Calu3 (cell line): ENCODE measurements at regions of chr14 and their contacts with region 1.

Region 1: DNA sequence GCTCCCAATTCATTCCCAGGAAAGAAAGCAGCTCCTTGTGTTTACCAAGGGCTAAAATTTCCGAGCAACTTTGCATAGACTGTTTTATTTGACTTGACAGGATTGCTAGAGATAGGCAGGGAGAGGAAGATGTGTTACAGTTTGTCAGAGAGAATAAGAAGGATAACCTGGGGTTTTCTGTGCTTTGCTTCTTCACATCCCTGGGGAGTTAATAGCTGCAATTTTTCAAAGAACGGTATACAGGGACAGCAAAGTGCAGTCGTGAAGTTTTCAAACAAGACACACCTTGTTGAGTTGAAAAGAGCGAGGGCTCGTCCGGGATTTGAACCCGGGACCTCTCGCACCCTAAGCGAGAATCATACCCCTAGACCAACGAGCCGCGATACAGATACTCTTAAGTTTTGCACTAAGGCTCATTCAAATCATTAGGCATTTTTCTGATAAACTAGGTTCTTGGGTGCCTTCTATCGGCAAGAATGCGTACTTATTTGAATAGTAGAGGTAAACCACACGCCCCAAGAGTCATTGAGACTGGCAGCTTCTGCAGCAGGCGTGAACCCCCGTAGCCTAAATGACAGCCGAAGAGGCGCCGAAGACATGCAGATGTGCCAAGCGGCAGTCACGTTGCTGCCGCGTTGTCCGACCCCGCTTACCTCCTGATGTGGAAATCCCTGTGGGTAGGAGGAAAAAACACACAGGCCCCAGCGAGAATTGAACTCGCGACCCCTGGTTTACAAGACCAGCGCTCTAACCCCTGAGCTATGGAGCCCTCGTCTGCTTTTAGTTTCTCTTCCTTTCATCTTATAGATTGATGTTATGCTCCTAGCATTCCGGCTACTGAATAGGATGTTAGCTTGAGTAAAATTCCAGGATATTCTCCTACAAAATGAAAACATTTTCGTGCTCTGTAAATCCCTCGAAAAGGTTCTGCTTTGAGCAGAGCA is 22.2 kb upstream of the RNASE12 start:
- DNase-seq: peak; percentile 86
- H3K4me3 Mint-ChIP-seq: no peak overlapping the region
- H3K27ac Mint-ChIP-seq: no peak overlapping the region
- H3K4me1 Mint-ChIP-seq: peaks cover 8% of the 10 kb centered on the region
- H3K27me3 Mint-ChIP-seq: no peaks in the 10 kb centered on the region
- CTCF ChIP-seq: peak; percentile 72

Region 2: GRCh38 chr14:20343092-20343861 is 270.1 kb before region 1 on chr14 and contains the start of gene PARP2:
- CTCF ChIA-PET with region 1: interaction called, 11 read pairs
- intact Hi-C with region 1: no loop called
- DNase-seq: peak; percentile 98
- H3K4me3 Mint-ChIP-seq: peak within 1 kb of the TSS; percentile 93
- H3K27ac Mint-ChIP-seq: peak within 1 kb of the TSS; percentile 98
- H3K4me1 Mint-ChIP-seq: peaks cover 7% of the 10 kb centered on the region
- H3K27me3 Mint-ChIP-seq: no peaks in the 10 kb centered on the region
- CTCF ChIP-seq: no peak
- total RNA-seq, gene PARP2: 28.6 and 30.5 TPM in 2 replicates

Region 3: DNA sequence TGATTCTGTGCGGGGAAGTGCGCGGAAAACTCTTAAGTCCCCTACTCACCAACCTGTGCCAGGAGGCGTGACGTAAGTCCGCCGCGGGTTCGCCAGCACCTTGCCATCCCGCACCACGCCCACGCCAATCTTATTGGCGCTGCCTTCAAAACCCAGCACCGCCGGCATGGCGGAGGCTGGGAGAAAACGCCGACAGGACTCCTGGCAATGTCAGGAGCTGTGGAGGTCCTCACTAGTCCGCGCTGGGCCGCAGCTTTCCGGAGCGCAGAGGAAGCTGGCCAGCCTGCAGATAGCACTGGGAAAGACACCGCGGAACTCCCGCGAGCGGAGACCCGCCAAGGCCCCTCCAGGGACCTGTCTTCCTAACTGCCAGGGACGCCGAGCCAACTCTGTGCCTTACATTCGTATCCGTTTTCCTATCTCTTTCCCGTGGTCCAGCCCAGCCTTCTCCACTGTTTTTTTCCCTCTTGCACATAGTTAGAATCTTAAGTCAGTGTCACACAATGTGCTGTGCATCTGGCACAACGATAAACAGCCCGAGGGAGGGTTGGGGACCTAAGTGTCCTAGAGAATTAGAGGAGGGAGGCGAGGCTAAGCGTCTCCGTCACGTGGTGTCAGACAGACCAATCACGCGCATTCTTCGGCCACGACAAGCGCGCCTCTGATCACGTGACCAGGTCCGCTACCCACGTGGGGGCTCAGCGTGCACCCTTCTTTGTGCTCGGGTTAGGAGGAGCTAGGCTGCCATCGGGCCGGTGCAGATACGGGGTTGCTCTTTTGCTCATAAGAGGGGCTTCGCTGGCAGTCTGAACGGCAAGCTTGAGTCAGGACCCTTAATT is 158.6 kb before region 1 on chr14 and contains the starts of genes APEX1 and OSGEP:
- CTCF ChIA-PET with region 1: no interaction called
- intact Hi-C with region 1: loop called (anchors 1 kb)
- DNase-seq: peak; percentile 96
- H3K4me3 Mint-ChIP-seq: no peak within 1 kb of the TSS
- H3K27ac Mint-ChIP-seq: no peak within 1 kb of the TSS
- H3K4me1 Mint-ChIP-seq: peaks cover 4% of the 10 kb centered on the region
- H3K27me3 Mint-ChIP-seq: no peaks in the 10 kb centered on the region
- CTCF ChIP-seq: no peak
- total RNA-seq, gene APEX1: 205 TPM in 2 replicates
- total RNA-seq, gene OSGEP: 46.2 and 54.3 TPM in 2 replicates

Region 4: DNA sequence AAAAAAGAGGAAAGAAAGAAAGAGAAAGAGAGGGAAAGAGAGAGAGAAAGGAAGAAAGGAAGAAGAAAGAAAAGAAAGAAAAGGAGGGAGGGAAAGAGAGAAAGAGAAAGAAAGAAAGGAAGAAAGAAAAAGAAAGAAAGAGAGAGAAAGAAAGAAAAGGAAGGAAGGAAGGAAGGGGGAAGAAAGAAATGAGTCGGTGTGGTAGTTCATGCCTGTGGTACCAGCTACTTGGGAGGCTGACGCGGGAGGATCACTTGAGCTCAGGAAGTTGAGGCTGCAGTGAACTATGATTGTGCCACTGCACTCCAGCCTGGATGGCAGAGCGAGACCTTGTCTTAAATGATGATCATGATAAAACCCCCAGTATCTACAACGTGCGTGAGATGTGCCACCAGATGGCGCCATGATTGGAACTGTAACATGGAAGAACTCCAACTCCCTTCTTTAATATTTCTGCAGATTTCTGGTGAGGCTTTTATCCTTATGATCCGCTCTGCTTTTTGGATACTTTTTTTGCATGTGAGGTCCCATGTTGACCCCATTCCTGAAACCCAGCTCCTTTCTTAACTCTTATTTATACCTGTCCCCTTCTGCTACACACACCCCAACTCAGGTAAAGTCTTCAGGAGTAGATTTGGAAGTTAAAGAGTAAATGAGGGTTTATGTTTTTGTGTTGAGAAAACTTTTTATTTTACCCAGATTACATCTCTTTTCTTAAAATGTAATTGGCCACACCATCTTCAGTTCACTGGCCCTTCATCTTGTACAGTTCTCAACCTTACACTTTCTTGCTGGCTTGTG is 82.4 kb before region 1 on chr14:
- CTCF ChIA-PET with region 1: no interaction called
- intact Hi-C with region 1: loop called (anchors 5 kb)
- DNase-seq: peak; percentile 66
- H3K4me3 Mint-ChIP-seq: no peak overlapping the region
- H3K27ac Mint-ChIP-seq: no peak overlapping the region
- H3K4me1 Mint-ChIP-seq: peaks cover 10% of the 10 kb centered on the region
- H3K27me3 Mint-ChIP-seq: peaks cover 41% of the 10 kb centered on the region
- CTCF ChIP-seq: peak; percentile 42

Region 5: GRCh38 chr14:20682435-20683124 is 69.2 kb after region 1 on chr14:
- CTCF ChIA-PET with region 1: interaction called, 12 read pairs
- intact Hi-C with region 1: loop called (anchors 5 kb)
- DNase-seq: peak; percentile 83
- H3K4me3 Mint-ChIP-seq: no peak overlapping the region
- H3K27ac Mint-ChIP-seq: no peak overlapping the region
- H3K4me1 Mint-ChIP-seq: peaks cover 32% of the 10 kb centered on the region
- H3K27me3 Mint-ChIP-seq: no peaks in the 10 kb centered on the region
- CTCF ChIP-seq: no peak